ENCODE measurements at regions of chr18 and their contacts with region 1.

Region 1: GRCh38 chr18:63518178-63519012 is 23.8 kb upstream of the SERPINB12 start:
- H3K4me3 ChIP-seq: no peak overlapping the region
- H3K27ac ChIP-seq: no peak overlapping the region
- H3K4me1 ChIP-seq: peaks cover 3% of the 10 kb centered on the region; the same call in 1 of the 2 replicates
- CTCF ChIP-seq: peak; percentile 81

Region 2: GRCh38 chr18:63505566-63506335 is 12.6 kb before region 1 on chr18:
- CTCF ChIA-PET with region 1: interaction called, 35 read pairs
- POLR2A ChIA-PET with region 1: no interaction called
- H3K4me3 ChIP-seq: no peak overlapping the region
- H3K27ac ChIP-seq: no peak overlapping the region
- H3K4me1 ChIP-seq: no peaks in the 10 kb centered on the region
- CTCF ChIP-seq: 0 out of 2 replicates have a peak, but pooled peaks have one; percentile 27

Region 3: GRCh38 chr18:63534615-63535014 is 16.2 kb after region 1 on chr18:
- CTCF ChIA-PET with region 1: interaction called, 14 read pairs
- POLR2A ChIA-PET with region 1: no interaction called
- H3K4me3 ChIP-seq: no peak overlapping the region
- H3K27ac ChIP-seq: no peak overlapping the region
- H3K4me1 ChIP-seq: no peaks in the 10 kb centered on the region
- CTCF ChIP-seq: no peak

Region 4: DNA sequence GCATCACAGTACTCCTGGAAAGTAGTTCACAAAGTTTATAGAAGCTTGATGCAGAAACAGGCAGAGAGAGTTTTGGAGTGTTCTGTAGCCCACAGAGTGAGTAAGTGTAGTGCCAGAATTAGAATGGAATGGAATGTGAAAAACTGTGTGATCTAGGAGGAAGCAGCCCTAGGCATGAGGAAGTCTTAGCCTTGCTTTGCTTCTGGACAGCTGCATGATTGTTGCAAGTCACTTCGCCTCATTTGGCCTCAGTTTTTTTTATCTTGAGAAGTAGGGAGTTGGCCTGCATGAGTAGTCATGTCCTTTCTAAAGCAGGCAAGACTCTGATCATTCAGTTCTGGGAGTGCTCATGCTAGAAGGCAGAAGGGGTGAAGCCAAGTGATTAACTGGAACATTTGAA is 34.7 kb after region 1 on chr18:
- CTCF ChIA-PET with region 1: interaction called, 25 read pairs
- POLR2A ChIA-PET with region 1: no interaction called
- H3K4me3 ChIP-seq: no peak overlapping the region
- H3K27ac ChIP-seq: no peak overlapping the region
- H3K4me1 ChIP-seq: no peaks in the 10 kb centered on the region
- CTCF ChIP-seq: no peak

Region 5: GRCh38 chr18:63562284-63562683 is 43.9 kb after region 1 on chr18:
- CTCF ChIA-PET with region 1: interaction called, 26 read pairs
- POLR2A ChIA-PET with region 1: interaction called, 3 read pairs
- H3K4me3 ChIP-seq: no peak overlapping the region
- H3K27ac ChIP-seq: no peak overlapping the region
- H3K4me1 ChIP-seq: no peaks in the 10 kb centered on the region
- CTCF ChIP-seq: no peak

Region 6: GRCh38 chr18:63848159-63848558 is 329.8 kb after region 1 on chr18:
- CTCF ChIA-PET with region 1: interaction called, 100 read pairs
- POLR2A ChIA-PET with region 1: no interaction called
- H3K4me3 ChIP-seq: no peak overlapping the region
- H3K27ac ChIP-seq: no peak overlapping the region
- H3K4me1 ChIP-seq: no peaks in the 10 kb centered on the region
- CTCF ChIP-seq: 0 out of 2 replicates have a peak, but pooled peaks have one; percentile 7

Measured in HEK293 (cell line).